ENCODE measurements at regions of chr1 and their contacts with region 1.

Region 1: DNA sequence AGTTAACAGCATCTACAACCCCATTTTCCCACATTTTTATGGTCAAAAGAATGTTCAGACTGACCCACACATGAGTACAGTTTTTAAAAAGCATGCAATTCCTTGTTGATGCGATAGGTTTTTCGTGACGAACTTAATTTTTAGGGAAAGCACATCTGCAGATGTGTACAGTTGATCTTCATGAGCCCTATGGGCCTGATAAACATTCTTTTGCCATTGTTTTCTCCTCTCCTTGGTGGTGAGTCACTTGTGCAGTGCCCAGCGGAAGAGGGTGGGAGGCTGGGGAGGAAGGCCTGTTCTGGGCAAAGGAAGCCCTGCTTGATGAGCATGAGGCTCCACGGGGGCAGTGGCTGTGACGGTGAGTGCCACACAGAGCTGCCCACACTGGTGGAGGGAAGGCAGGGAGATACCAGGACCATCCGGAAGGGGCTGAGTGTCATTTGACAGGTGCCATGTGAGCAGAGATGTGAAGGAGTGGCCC is 5.3 kb downstream of the ARF1 start:
- DNase-seq: peak; percentile 68
- H3K4me3 ChIP-seq: peak overlapping the region in 1 of 3 experiments; percentile 36
- H3K27ac ChIP-seq: peak overlapping the region; percentile 42
- H3K4me1 ChIP-seq: peaks cover 84% of the 10 kb centered on the region
- H3K27me3 ChIP-seq: no peaks in the 10 kb centered on the region
- CTCF ChIP-seq: no peak

Region 2: DNA sequence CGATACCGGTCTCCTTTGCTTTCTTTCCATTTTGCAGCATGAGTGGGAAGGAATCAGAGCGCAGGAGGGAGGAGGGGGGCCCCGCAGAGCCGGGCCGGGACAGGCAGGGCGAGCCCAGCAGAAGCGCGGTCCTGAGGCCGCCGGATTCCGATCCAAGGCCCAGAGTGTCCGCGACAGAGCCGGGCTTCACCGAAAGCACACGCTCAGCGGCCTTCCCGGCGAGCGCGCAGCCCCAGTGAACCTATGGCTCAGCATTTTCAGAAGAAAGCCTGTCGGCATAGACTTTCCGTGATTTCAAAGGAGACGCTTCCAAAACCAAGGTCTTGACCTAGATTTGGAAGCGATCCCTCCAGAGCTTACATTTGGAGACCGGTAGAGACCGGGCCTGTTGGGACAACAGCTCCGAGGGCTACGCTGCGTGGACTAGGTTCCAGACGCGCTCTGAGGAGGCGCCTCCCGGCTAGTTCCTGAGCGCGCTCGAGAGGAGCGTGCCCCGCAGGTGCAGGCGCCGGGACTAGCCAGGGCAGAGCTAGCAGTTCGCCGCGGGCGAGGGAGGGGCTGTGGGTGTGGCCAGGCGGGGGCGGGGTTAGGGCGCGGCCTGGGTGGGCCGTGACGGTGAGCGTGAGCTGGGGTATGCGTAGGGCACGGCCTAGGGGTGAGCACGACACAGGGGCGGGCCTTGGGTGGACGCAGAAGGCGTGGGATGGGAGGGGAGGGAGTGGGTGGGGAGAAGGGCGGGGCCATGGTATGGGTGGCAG is 300.1 kb before region 1 on chr1:
- CTCF ChIA-PET with region 1: no interaction called
- dilution Hi-C with region 1: no loop called
- in situ Hi-C with region 1: no loop called
- intact Hi-C with region 1: loop called (anchors 5 kb)
- DNase-seq: peak; percentile 96
- H3K4me3 ChIP-seq: peak overlapping the region; percentile 46 to 84 (median 69)
- H3K27ac ChIP-seq: peak overlapping the region; percentile 50
- H3K4me1 ChIP-seq: peaks cover 22% of the 10 kb centered on the region
- H3K27me3 ChIP-seq: no peaks in the 10 kb centered on the region
- CTCF ChIP-seq: no peak

Region 3: DNA sequence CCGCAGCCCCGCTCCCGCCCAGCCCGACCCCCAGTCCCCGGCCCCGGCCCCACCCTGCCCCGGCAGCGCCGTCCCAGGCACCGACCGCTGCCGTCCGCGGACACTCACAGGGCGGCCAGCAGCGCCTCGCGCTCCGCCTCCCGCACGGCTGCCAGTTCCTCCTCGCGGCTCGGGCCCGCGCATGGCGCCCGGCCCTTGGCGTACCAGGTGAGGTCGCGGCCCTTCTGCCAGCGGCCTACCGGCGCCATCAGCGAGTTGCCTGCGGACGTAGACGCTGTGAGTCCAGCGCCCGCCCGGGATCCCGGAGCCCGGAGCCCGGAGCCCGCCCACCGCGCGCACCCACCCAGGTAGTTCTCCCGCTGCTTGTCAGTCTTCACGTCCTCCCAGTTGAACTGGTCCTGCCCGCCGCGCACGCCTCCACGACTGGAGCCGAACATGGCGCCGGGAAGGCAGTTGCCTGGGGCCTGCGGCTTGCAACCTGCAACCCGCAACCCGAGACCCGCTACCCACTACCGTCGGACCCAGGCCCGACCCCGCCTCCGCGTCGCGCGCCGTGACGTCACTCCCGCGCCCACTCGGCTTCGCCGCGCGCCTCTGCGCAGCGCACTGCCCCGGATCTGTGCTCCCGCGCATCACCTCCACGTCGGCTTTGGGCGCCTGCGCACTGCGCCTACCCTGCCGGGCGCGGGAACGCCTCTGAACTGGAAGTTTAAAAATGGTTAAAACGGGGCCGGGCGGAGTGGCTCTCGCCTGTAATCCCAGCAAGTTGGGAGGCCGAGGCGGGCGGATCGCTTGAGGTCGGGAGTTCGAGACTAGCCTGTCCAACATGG is 15.2 kb after region 1 on chr1 and contains the start of gene C1orf35:
- CTCF ChIA-PET with region 1: no interaction called
- dilution Hi-C with region 1: no loop called
- in situ Hi-C with region 1: no loop called
- intact Hi-C with region 1: loop called (anchors 1 kb)
- DNase-seq: peak; percentile 88
- H3K4me3 ChIP-seq: peak within 1 kb of the TSS; percentile 66 to 96 (median 82)
- H3K27ac ChIP-seq: peak within 1 kb of the TSS; percentile 54
- H3K4me1 ChIP-seq: peaks cover 11% of the 10 kb centered on the region
- H3K27me3 ChIP-seq: no peaks in the 10 kb centered on the region
- CTCF ChIP-seq: no peak
- total RNA-seq, gene C1orf35: 5.7 to 19.6 TPM